ENCODE measurements at regions of chr1 and their contacts with region 1.

Region 1: GRCh38 chr1:194658090-194658439 is 1471.7 kb upstream of the B3GALT2 start:
- DNase-seq: peak; percentile 48 to 86 (median 60)
- ATAC-seq: peak; percentile 93
- H3K4me3 ChIP-seq: peak overlapping the region; percentile 25
- H3K27ac ChIP-seq: peak overlapping the region; percentile 87
- H3K4me1 ChIP-seq: peaks cover 0 to 3% of the 10 kb centered on the region in 2 experiments; a peak in 3 of 5 replicates
- H3K27me3 ChIP-seq: no peaks in the 10 kb centered on the region
- CTCF ChIP-seq: no peak
- EP300 ChIP-seq: peak; percentile 56; the same call in 1 of the 2 replicates
- POLR2A ChIP-seq: no peak; the same call in 1 of the 2 replicates
- RAD21 ChIP-seq: no peak

Region 2: DNA sequence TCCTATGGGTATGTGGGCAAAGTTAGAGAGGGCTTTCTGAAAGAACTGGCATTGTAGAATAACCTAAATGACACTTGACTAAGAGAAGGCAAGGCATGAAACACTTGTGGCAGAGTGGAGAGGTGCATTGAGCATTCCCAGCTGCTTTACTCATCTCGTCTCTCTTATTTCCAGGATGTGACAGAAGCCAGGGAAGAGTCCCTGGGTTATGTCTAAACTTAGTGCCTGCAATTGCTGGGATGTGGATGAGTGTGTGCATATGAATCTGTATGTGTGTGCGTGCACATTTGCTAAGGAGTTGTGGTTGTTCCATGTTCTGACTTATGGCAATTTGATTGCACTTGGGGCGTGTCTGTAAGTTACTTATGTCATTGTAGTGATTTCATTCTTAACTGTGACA is 145.1 kb before region 1 on chr1:
- CTCF ChIA-PET with region 1: no interaction called
- POLR2A ChIA-PET with region 1: no interaction called
- in situ Hi-C with region 1: no loop called
- intact Hi-C with region 1: no loop called
- DNase-seq: no peak
- ATAC-seq: no peak
- H3K4me3 ChIP-seq: no peak overlapping the region
- H3K27ac ChIP-seq: no peak overlapping the region
- H3K4me1 ChIP-seq: no peaks in the 10 kb centered on the region
- H3K27me3 ChIP-seq: no peaks in the 10 kb centered on the region
- CTCF ChIP-seq: no peak
- EP300 ChIP-seq: no peak
- POLR2A ChIP-seq: no peak
- RAD21 ChIP-seq: no peak

Region 3: GRCh38 chr1:194698908-194699318 is 40.8 kb after region 1 on chr1:
- CTCF ChIA-PET with region 1: no interaction called
- POLR2A ChIA-PET with region 1: interaction called, 5 read pairs
- in situ Hi-C with region 1: no loop called
- intact Hi-C with region 1: loop called (anchors 2 kb)
- DNase-seq: peak; percentile 22 to 88 (median 54)
- ATAC-seq: peak; percentile 99
- H3K4me3 ChIP-seq: no peak overlapping the region
- H3K27ac ChIP-seq: peak overlapping the region; percentile 33
- H3K4me1 ChIP-seq: no peaks in the 10 kb centered on the region; a peak in 1 of 5 replicates
- H3K27me3 ChIP-seq: no peaks in the 10 kb centered on the region
- CTCF ChIP-seq: peak in 2 of 3 experiments; percentile 44 to 49; a peak in 4 of 6 replicates
- EP300 ChIP-seq: peak; percentile 39; the same call in 1 of the 2 replicates
- POLR2A ChIP-seq: no peak
- RAD21 ChIP-seq: peak; percentile 61 to 75